ENCODE measurements at regions of chr1 and their contacts with region 1.

Region 1: DNA sequence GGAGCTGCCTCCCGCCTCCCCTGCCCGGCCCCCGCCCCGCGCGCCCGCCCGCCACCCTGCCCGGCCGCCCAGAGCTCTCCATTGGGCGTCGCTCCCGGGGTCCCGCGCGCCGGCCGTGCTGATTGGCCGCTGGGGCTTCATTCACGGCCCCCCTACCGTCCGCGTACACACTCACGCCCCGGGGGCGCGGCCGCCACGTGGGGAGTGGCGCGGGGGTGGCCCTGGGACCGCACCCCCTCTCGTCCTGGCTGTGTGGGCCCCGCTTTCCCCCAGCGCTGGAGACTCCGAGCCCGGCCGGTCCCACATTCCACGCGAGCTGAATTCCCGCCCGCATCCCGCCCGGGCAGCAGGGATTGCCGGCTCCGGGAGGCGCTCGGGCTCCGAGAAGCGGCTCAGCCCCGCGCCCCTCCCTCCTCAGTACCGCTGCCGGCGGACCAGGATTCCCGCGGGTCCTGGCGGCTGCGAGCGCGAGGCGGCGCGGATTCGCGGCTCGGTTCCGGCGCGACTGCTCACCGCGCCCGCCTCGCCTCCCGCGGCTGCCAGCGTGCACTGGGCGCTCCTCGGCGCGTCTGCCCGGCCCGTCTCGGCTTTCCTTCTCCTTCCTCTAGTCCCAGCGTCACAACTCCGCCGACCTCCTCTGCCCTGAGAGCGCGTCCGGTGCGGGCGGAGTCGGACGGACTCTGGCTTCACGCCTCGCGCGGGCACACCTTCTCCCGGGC is 450 bp upstream of the POU3F1 start:
- DNase-seq: peak; percentile 90
- H3K4me3 ChIP-seq: peak overlapping the region; percentile 70 to 87 (median 78)
- H3K27ac ChIP-seq: no peak overlapping the region
- H3K4me1 ChIP-seq: peaks cover 20% of the 10 kb centered on the region
- H3K27me3 ChIP-seq: peaks cover 11% of the 10 kb centered on the region
- CTCF ChIP-seq: peak in 1 of 2 donors; percentile 36

Region 2: DNA sequence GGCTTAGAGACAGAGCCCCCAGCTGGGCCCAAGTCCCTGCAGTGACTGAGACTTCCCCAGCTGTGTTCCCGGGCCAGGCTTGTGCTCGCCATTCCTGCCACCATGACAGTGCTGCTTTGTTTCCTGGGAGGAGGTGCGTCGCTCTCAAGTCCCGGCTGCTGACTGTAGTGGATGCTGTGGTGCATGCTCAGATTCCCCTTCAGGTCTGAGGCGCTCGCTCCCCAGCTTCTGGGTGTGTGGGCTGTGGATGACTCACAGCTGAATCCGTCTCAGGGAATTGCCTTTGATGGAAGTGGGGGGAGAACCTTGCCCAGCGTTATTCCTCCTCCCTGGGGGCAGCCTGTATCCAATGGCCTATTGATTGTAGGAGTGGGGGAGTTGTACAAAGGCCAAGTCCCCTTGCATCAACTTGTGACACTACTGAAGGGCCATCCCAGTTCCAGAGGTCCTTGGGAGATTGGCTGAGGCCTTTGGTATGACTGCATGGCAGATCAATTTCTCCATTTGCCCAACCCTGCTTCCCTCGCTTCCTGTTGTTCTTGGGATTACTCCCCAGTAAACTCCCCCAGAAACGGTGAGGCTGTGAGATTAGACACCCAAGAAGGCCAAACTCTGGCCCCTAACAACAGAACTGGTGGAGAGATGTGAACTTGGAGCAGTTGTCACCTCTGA is 17.3 kb after region 1 on chr1:
- CTCF ChIA-PET with region 1: no interaction called
- dilution Hi-C with region 1: no loop called
- in situ Hi-C with region 1: no loop called
- intact Hi-C with region 1: loop called (anchors 2 kb)
- DNase-seq: peak; percentile 88
- H3K4me3 ChIP-seq: no peak overlapping the region
- H3K27ac ChIP-seq: no peak overlapping the region
- H3K4me1 ChIP-seq: peaks cover 13% of the 10 kb centered on the region
- H3K27me3 ChIP-seq: no peaks in the 10 kb centered on the region
- CTCF ChIP-seq: peak in 1 of 2 donors; percentile 34

Region 3: GRCh38 chr1:38114241-38115026 is 67.4 kb after region 1 on chr1:
- CTCF ChIA-PET with region 1: no interaction called
- dilution Hi-C with region 1: loop called (anchors 5 kb)
- in situ Hi-C with region 1: no loop called
- intact Hi-C with region 1: loop called (anchors 2 kb)
- DNase-seq: no peak
- H3K4me3 ChIP-seq: no peak overlapping the region
- H3K27ac ChIP-seq: no peak overlapping the region
- H3K4me1 ChIP-seq: peaks cover 18% of the 10 kb centered on the region
- H3K27me3 ChIP-seq: no peaks in the 10 kb centered on the region
- CTCF ChIP-seq: no peak

Region 4: DNA sequence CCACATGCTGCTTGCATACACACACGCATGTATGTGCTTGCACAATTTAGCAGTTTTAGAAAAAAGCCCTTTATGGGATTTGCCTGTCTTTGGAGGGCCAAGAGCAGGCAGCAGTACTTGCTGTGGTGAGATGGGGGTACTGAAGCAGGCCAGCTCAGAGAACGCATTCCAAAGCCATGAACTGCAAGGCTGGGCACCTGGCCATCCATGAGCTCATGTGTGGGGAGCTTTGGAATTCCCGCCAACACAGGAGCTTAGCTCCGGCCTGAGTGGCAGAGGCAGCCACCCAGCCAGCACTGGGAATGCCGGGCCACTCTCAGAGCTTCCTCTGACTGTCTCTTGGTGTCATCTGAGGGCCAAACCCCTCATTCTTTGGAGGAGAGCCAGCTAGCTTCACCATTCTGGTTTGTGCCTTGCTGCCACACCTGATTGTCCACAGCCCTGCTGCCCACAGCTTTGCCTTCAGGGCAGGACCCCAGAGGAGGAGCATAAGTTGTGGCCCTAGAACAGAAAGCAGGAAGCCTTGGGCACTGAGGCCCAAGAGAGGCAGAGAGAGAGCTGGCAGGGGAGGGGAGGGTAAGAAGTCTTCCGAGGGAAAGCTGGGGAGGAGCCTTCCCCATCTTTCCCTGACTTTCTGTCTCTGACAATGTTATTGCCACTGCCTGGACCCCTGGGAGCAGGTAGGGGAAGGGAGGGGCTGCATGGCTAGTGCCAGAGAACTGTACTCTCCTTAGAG is 91.6 kb after region 1 on chr1:
- CTCF ChIA-PET with region 1: no interaction called
- dilution Hi-C with region 1: no loop called
- in situ Hi-C with region 1: no loop called
- intact Hi-C with region 1: loop called (anchors 5 kb)
- DNase-seq: peak; percentile 90
- H3K4me3 ChIP-seq: no peak overlapping the region
- H3K27ac ChIP-seq: peak overlapping the region; percentile 36
- H3K4me1 ChIP-seq: peaks cover 27% of the 10 kb centered on the region
- H3K27me3 ChIP-seq: peaks cover 2% of the 10 kb centered on the region
- CTCF ChIP-seq: peak; percentile 38 to 48

Region 5: DNA sequence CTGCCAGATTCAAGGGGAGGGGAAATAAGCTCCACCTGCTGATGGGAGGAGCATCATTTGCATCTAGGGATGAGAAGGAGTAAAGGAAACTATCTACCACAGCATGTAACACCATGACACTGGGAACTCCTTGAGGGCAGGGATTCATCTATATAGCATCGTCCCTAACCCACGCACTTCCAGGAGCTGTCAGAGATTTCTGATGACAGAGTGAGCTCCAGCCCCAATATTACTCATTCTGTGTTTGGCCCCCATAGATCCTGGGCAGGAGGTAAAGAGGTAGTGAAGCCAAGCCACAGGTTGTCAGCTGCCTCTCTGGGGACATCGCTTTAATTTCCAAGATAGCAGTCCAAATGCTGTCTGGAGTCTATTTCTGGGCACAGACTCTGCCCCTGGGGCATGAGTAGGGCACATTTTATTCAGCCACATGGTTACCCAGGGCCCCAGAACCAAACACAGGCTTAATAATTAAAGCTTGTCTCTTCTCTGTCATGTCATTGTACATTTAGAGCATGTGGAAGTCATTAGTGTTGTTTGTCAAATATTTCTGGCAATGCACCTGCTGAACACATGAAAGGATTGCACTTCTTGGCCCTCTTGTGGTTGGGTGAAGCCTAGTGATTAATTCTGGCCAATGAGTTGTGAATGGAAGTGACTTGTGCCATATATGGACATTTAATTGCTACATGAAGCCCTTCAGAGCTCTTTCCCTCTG is 105.5 kb after region 1 on chr1:
- CTCF ChIA-PET with region 1: no interaction called
- dilution Hi-C with region 1: no loop called
- in situ Hi-C with region 1: no loop called
- intact Hi-C with region 1: loop called (anchors 2 kb)
- DNase-seq: peak; percentile 36
- H3K4me3 ChIP-seq: no peak overlapping the region
- H3K27ac ChIP-seq: no peak overlapping the region
- H3K4me1 ChIP-seq: no peaks in the 10 kb centered on the region
- H3K27me3 ChIP-seq: no peaks in the 10 kb centered on the region
- CTCF ChIP-seq: peak; percentile 38 to 59

Region 6: GRCh38 chr1:38586993-38587646 is 540.1 kb after region 1 on chr1:
- CTCF ChIA-PET with region 1: no interaction called
- dilution Hi-C with region 1: no loop called
- in situ Hi-C with region 1: loop called in 1 of 2 experiments (anchors 25 kb)
- intact Hi-C with region 1: loop called (anchors 1 kb)
- DNase-seq: peak; percentile 15
- H3K4me3 ChIP-seq: no peak overlapping the region
- H3K27ac ChIP-seq: no peak overlapping the region
- H3K4me1 ChIP-seq: no peaks in the 10 kb centered on the region
- H3K27me3 ChIP-seq: no peaks in the 10 kb centered on the region
- CTCF ChIP-seq: peak; percentile 92 to 94